ENCODE measurements at regions of chr1 and their contacts with region 1.

Region 1: GRCh38 chr1:2233997-2234761 is 6.1 kb downstream of the SKI start:
- DNase-seq: peak in 5 of 6 donors; percentile 28 to 85 (median 71)
- ATAC-seq: peak; percentile 15 to 54 (median 44)
- H3K4me3 ChIP-seq: peak overlapping the region in 1 of 4 donors; percentile 26
- H3K27ac ChIP-seq: peak overlapping the region in 3 of 4 donors; percentile 45 to 70 (median 70)
- H3K4me1 ChIP-seq: peaks cover 23 to 55% (median 34%) of the 10 kb centered on the region in 3 donors
- H3K27me3 ChIP-seq: no peaks in the 10 kb centered on the region
- CTCF ChIP-seq: no peak

Region 2: DNA sequence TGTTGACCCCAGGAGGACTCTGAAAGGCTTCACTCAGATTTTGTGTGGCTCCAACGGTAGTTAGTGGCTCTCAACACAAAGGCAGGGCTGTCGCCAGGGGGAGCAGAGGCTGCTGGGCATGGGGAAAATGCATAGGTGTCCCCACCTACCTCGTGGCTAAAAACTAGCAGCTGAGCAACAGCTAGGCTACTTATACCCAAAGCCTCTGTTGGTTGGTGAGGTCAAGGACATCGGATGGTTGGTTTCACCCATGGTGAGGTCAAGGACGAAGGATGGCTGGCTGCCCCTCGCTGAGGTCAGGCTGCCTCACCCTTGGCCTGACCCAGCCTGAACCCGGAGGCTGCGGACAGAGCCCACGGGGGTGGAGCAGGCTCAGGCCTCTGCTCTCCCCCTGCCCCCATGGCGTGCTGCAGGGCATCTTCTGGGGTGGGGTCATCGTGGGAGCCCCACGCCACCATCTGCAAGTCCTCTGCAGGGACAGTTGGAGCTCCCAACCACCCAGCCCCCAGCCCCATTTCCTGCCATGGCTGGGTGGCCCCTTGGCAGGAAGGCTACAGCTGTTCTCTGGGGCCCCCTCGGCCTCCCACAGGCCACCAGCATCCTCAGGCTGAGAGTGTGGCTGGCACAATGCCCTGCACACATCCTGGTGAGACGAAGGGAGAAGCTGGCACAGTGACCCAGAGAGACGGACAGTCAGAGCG is 334.8 kb before region 1 on chr1:
- intact Hi-C with region 1: no loop called
- DNase-seq: peak in 2 of 6 donors; percentile 40 to 56
- ATAC-seq: no peak
- H3K4me3 ChIP-seq: no peak overlapping the region
- H3K27ac ChIP-seq: no peak overlapping the region
- H3K4me1 ChIP-seq: peaks cover 6 to 7% (median 6%) of the 10 kb centered on the region in 3 donors
- H3K27me3 ChIP-seq: no peaks in the 10 kb centered on the region
- CTCF ChIP-seq: no peak

Region 3: DNA sequence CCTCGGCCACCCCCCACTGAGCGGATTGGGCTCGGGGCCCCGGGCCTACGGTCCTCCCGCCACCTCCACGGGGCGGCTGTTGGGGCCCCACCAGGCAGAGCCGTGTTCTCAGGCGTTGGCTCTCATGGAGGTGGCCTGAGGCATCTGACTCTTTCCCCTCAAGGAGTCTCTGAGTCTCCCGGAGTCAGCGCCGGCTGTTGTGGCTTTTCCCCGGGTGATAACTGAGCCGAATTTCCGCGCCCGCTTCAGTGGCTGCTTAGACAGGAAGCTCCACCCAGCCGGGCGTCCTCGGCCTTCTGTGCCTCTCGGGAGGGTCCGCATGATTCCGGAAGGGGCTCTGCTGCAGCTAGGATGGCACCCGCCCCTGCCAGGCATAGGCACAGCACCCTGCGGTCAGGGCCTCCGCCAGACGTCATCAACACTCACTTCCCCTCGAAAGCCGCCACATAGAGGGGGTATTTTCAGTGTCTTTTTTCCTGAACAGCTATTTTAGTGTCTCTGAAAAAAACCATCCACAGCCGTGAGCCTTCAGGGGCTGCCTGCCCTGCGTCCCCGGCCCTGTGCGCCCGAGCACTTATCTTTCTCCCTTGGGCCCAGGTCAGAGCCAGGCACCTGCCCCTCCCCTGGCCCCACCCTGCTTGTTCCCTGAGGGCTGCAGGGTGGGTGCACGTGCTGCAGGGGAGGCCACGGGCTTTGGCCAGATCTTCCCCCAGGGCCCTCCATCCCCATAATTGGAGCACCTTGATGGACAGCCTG is 66.8 kb after region 1 on chr1:
- intact Hi-C with region 1: loop called in 1 of 3 experiments (anchors 10 kb)
- DNase-seq: peak in 1 of 6 donors; percentile 69
- ATAC-seq: peak in 3 of 4 donors; percentile 37 to 66 (median 63)
- H3K4me3 ChIP-seq: peak overlapping the region in 1 of 4 donors; percentile 17
- H3K27ac ChIP-seq: peak overlapping the region in 3 of 4 donors; percentile 11 to 69 (median 53)
- H3K4me1 ChIP-seq: no peaks in the 10 kb centered on the region
- H3K27me3 ChIP-seq: no peaks in the 10 kb centered on the region
- CTCF ChIP-seq: no peak